MCF 10A (cell line): ENCODE measurements at regions of chr12 and their contacts with region 1.

Region 1: DNA sequence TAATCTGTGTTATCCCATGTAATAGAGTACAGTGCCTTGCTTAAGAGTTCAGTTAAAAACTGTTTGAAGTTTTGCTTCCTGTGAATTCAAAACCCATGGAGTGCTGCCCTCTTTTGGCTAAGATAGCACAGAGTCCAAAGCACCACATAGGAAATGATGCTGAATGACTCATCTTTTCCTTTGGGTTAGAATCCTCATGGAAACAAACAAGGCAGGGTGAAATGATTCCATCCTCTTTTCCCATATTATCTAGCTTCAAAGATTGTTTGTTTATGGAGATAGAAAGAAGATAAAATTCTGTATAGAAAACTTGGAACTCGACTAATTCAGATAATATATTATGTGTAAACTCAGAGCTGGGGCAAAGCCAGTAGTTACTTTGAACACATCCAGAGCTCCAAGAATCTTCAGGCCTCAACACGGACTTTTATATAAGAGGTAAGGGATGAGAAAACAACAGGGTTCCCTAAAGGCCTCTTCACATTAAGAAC is 87.4 kb downstream of the OTOGL start:
- DNase-seq: peak; percentile 88
- H3K4me3 Mint-ChIP-seq: no peak overlapping the region
- H3K27ac Mint-ChIP-seq: no peak overlapping the region
- H3K4me1 Mint-ChIP-seq: peaks cover 19% of the 10 kb centered on the region
- H3K27me3 Mint-ChIP-seq: no peaks in the 10 kb centered on the region
- CTCF ChIP-seq: peak; percentile 78

Region 2: GRCh38 chr12:79407671-79408622 is 778.8 kb before region 1 on chr12:
- CTCF ChIA-PET with region 1: interaction called, 6 read pairs
- POLR2A ChIA-PET with region 1: no interaction called
- intact Hi-C with region 1: loop called (anchors 1 kb)
- DNase-seq: peak; percentile 89
- H3K4me3 Mint-ChIP-seq: no peak overlapping the region
- H3K27ac Mint-ChIP-seq: peak overlapping the region; percentile 54
- H3K4me1 Mint-ChIP-seq: peaks cover 13% of the 10 kb centered on the region
- H3K27me3 Mint-ChIP-seq: no peaks in the 10 kb centered on the region
- CTCF ChIP-seq: peak; percentile 75

Region 3: GRCh38 chr12:79737875-79738718 is 448.7 kb before region 1 on chr12:
- CTCF ChIA-PET with region 1: no interaction called
- POLR2A ChIA-PET with region 1: no interaction called
- intact Hi-C with region 1: loop called (anchors 1 kb)
- DNase-seq: peak; percentile 80
- H3K4me3 Mint-ChIP-seq: no peak overlapping the region
- H3K27ac Mint-ChIP-seq: no peak overlapping the region
- H3K4me1 Mint-ChIP-seq: no peaks in the 10 kb centered on the region
- H3K27me3 Mint-ChIP-seq: no peaks in the 10 kb centered on the region
- CTCF ChIP-seq: peak; percentile 62

Region 4: GRCh38 chr12:79886917-79887519 is 299.8 kb before region 1 on chr12:
- CTCF ChIA-PET with region 1: interaction called, 9 read pairs
- POLR2A ChIA-PET with region 1: no interaction called
- intact Hi-C with region 1: loop called (anchors 1 kb)
- DNase-seq: peak; percentile 61
- H3K4me3 Mint-ChIP-seq: no peak overlapping the region
- H3K27ac Mint-ChIP-seq: no peak overlapping the region
- H3K4me1 Mint-ChIP-seq: peaks cover 23% of the 10 kb centered on the region
- H3K27me3 Mint-ChIP-seq: no peaks in the 10 kb centered on the region
- CTCF ChIP-seq: peak; percentile 39

Region 5: GRCh38 chr12:80269803-80270552 is 83.2 kb after region 1 on chr12:
- CTCF ChIA-PET with region 1: interaction called, 233 read pairs
- POLR2A ChIA-PET with region 1: interaction called, 4 read pairs
- intact Hi-C with region 1: no loop called
- DNase-seq: peak; percentile 69
- H3K4me3 Mint-ChIP-seq: no peak overlapping the region
- H3K27ac Mint-ChIP-seq: no peak overlapping the region
- H3K4me1 Mint-ChIP-seq: peaks cover 23% of the 10 kb centered on the region
- H3K27me3 Mint-ChIP-seq: no peaks in the 10 kb centered on the region
- CTCF ChIP-seq: peak; percentile 68